ENCODE measurements at regions of chr5 and their contacts with region 1.

Region 1: DNA sequence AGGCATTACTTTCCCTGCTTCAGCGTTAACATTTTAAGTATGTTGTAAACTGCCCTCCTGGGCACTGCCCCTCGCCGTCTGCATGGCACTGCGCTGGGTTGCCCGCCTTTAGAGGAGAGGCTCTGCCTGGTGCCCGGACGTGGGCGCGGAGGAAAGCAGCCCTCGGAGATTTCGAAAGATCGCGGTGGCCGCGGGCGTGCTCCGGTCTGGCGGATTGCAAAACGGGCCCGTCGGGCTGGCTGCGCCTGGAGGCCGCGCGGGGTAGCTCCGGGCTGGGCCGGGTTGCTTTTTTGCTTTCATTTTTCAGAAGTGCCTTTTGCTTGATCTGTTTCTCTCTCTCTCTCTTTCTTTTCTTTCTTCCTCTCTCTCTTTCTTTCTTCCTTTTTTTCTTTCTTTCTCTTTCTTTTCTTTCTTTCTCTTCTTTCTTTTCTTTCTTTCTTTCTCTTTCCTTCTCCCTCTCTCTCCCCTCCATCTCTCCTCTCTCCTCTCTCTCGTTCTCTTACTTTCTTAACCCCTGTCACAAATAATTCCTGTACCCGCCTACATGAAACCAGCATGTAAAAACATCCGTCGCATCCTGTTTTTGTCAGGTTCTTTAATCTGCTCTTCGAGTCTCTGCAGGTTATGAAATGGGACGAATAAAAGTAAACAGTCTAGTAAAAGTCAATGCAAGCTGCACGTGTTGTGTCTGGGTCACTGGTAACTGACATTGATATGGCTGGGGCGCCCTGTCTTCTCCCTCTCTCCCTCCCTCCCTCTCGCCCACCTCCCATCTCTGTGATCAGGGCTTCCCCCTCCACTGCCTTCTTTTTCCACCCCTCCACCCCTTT is 1.7 kb downstream of the FST start:
- DNase-seq: peak; percentile 91
- H3K4me3 Mint-ChIP-seq: peak overlapping the region; percentile 89
- H3K27ac Mint-ChIP-seq: peak overlapping the region; percentile 84
- H3K4me1 Mint-ChIP-seq: peaks cover 32% of the 10 kb centered on the region
- H3K27me3 Mint-ChIP-seq: peaks cover 61% of the 10 kb centered on the region

Region 2: DNA sequence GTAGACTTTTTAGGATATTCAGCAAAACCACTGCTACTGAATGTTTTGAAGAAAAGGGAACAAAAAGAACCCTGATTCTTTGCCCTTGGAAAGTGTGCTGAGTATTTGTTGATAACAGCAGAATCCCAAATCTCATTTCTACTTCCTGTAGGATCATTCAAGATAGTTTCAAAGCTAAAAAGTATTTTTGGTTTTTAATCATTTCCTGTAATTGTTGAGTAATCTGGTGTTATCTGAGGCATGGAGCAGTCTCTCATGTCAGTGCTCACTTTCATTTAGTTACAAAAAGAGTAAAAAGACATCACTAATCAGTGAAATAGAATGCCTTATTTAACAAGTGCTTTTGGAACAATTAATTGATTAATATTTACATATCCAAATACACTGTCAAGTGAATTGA is 436.8 kb before region 1 on chr5:
- intact Hi-C with region 1: no loop called
- DNase-seq: no peak
- H3K4me3 Mint-ChIP-seq: no peak overlapping the region
- H3K27ac Mint-ChIP-seq: no peak overlapping the region
- H3K4me1 Mint-ChIP-seq: peaks cover 48% of the 10 kb centered on the region
- H3K27me3 Mint-ChIP-seq: no peaks in the 10 kb centered on the region

Region 3: GRCh38 chr5:53560506-53561191 is 78.5 kb after region 1 on chr5 and contains the start of gene NDUFS4:
- intact Hi-C with region 1: loop called (anchors 1 kb)
- DNase-seq: peak; percentile 94
- H3K4me3 Mint-ChIP-seq: peak within 1 kb of the TSS; percentile 97
- H3K27ac Mint-ChIP-seq: peak within 1 kb of the TSS; percentile 95
- H3K4me1 Mint-ChIP-seq: peaks cover 21% of the 10 kb centered on the region
- H3K27me3 Mint-ChIP-seq: peaks cover 22% of the 10 kb centered on the region
- total RNA-seq, gene NDUFS4: 54.9 and 56.2 TPM in 2 replicates

Region 4: DNA sequence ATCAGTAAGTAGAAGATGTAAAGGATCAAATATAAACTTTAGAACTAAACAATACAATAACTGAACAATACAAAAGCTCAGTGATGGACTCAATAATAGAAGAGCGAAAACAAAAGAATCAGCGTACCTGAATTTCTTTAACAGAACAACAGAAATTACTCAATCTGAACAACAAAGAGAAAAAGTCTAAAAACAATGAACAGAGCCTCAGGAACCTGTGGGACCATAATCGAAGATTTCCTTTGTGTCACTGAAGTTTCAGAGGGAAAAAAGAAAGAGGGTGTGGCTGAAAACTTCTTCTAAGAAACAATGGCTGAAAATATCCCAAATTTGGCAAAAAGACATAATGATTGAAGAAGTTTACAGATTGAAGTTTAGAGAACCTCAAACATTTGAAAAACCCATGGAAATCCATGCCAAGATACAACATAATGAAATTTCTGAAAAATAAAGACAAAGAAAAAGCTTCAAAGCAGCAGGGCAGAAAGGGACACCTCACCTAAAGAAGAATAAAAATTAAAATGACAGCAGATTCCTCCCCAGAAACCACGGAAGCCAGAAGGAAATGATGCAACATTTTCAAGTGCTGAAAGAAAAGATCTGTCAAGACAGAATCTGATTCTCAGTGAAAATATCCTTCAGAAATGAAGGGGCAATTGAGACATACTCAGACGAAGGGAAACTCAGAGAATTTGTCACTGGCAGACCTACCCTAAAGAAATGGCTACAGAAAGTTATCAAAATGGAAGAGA is 539.5 kb after region 1 on chr5:
- intact Hi-C with region 1: loop called (anchors 10 kb)
- DNase-seq: peak; percentile 79
- H3K4me3 Mint-ChIP-seq: peak overlapping the region; percentile 79
- H3K27ac Mint-ChIP-seq: peak overlapping the region; percentile 79
- H3K4me1 Mint-ChIP-seq: peaks cover 25% of the 10 kb centered on the region
- H3K27me3 Mint-ChIP-seq: no peaks in the 10 kb centered on the region

Region 5: GRCh38 chr5:54234304-54234933 is 752.3 kb after region 1 on chr5:
- intact Hi-C with region 1: loop called (anchors 5 kb)
- DNase-seq: no peak
- H3K4me3 Mint-ChIP-seq: no peak overlapping the region
- H3K27ac Mint-ChIP-seq: no peak overlapping the region
- H3K4me1 Mint-ChIP-seq: peaks cover 2% of the 10 kb centered on the region
- H3K27me3 Mint-ChIP-seq: peaks cover 11% of the 10 kb centered on the region

Measured in activated CD4-positive, alpha-beta T cell treated with anti-CD3 and anti-CD28 coated beads, Interleukin-2, amount 10 ng/mL, durations not matched to agents 24 days and 14 days (primary cell).